ENCODE measurements at regions of chr4 and their contacts with region 1.

Region 1: GRCh38 chr4:109559983-109560686 is at the start of gene MCUB:
- DNase-seq: peak; percentile 92
- H3K4me3 Mint-ChIP-seq: peak within 1 kb of the TSS; percentile 92
- H3K27ac Mint-ChIP-seq: peak within 1 kb of the TSS; percentile 97
- H3K4me1 Mint-ChIP-seq: peaks cover 53% of the 10 kb centered on the region
- H3K27me3 Mint-ChIP-seq: no peaks in the 10 kb centered on the region
- total RNA-seq, gene MCUB: 40.6 and 46.0 TPM in 2 replicates

Region 2: GRCh38 chr4:108118490-108118889 is 1441.6 kb before region 1 on chr4:
- intact Hi-C with region 1: loop called (anchors 10 kb)
- DNase-seq: no peak
- H3K4me3 Mint-ChIP-seq: peak overlapping the region; percentile 74
- H3K27ac Mint-ChIP-seq: peak overlapping the region; percentile 89
- H3K4me1 Mint-ChIP-seq: peaks cover 93% of the 10 kb centered on the region
- H3K27me3 Mint-ChIP-seq: no peaks in the 10 kb centered on the region

Region 3: GRCh38 chr4:109433205-109434006 is 126.7 kb before region 1 on chr4 and contains the start of gene SEC24B:
- intact Hi-C with region 1: loop called (anchors 1 kb)
- DNase-seq: peak; percentile 86
- H3K4me3 Mint-ChIP-seq: peak within 1 kb of the TSS; percentile 87
- H3K27ac Mint-ChIP-seq: peak within 1 kb of the TSS; percentile 79
- H3K4me1 Mint-ChIP-seq: peaks cover 57% of the 10 kb centered on the region
- H3K27me3 Mint-ChIP-seq: no peaks in the 10 kb centered on the region
- total RNA-seq, gene SEC24B: 32.5 and 34.0 TPM in 2 replicates

Region 4: GRCh38 chr4:109648266-109648996 is 88.3 kb after region 1 on chr4:
- intact Hi-C with region 1: loop called (anchors 1 kb)
- DNase-seq: no peak
- H3K4me3 Mint-ChIP-seq: peak overlapping the region; percentile 69
- H3K27ac Mint-ChIP-seq: peak overlapping the region; percentile 84
- H3K4me1 Mint-ChIP-seq: peaks cover 8% of the 10 kb centered on the region
- H3K27me3 Mint-ChIP-seq: no peaks in the 10 kb centered on the region

Region 5: DNA sequence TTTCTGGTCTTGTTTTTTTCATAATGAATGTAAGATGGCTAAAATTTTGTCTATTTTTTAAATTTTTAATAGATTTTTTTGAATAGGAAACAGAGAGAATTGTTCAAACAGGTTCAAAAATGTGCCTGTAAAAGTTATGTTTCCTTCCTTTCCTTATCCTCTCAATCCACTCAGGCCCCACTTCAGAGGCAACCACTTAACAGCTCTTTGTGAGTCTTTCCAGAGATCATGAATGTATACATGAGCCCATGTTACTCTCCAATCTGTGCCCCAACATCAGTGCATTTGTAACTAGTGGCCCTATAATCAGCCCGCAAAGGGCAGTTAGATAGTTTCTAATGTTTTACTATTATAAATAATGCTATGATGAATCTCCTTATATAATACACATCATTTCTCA is 227.7 kb after region 1 on chr4:
- intact Hi-C with region 1: no loop called
- DNase-seq: no peak
- H3K4me3 Mint-ChIP-seq: no peak overlapping the region
- H3K27ac Mint-ChIP-seq: no peak overlapping the region
- H3K4me1 Mint-ChIP-seq: no peaks in the 10 kb centered on the region
- H3K27me3 Mint-ChIP-seq: peaks cover 17% of the 10 kb centered on the region

Region 6: GRCh38 chr4:109815151-109816081 is 255.3 kb after region 1 on chr4 and contains the start of gene GAR1:
- intact Hi-C with region 1: loop called (anchors 1 kb)
- DNase-seq: peak; percentile 88
- H3K4me3 Mint-ChIP-seq: peak within 1 kb of the TSS; percentile 98
- H3K27ac Mint-ChIP-seq: peak within 1 kb of the TSS; percentile 96
- H3K4me1 Mint-ChIP-seq: peaks cover 52% of the 10 kb centered on the region
- H3K27me3 Mint-ChIP-seq: no peaks in the 10 kb centered on the region
- total RNA-seq, gene GAR1: 53.2 and 61.3 TPM in 2 replicates

Region 7: GRCh38 chr4:110296892-110297291 is 736.8 kb after region 1 on chr4:
- intact Hi-C with region 1: loop called (anchors 2 kb)
- DNase-seq: no peak
- H3K4me3 Mint-ChIP-seq: no peak overlapping the region
- H3K27ac Mint-ChIP-seq: peak overlapping the region; percentile 20
- H3K4me1 Mint-ChIP-seq: peaks cover 15% of the 10 kb centered on the region
- H3K27me3 Mint-ChIP-seq: peaks cover 17% of the 10 kb centered on the region

Measured in activated T-helper 1 cell treated with anti-CD3 and anti-CD28 coated beads, Interleukin-12 subunit alpha, Interleukin-12 subunit beta, Interleukin-2, Interleukin-4 antibody, amounts not matched to agents 30 ng/mL and 10 ng/mL and 1 ng/mL, durations not matched to agents 14 hours and 24 hours and 36 hours (primary cell).